ENCODE measurements at regions of chr7 and their contacts with region 1.

Region 1: GRCh38 chr7:41977151-41977651 is 259.8 kb downstream of the GLI3 start:
- DNase-seq: no peak
- H3K4me3 ChIP-seq: no peak overlapping the region
- H3K27ac ChIP-seq: no peak overlapping the region
- H3K27me3 ChIP-seq: no peaks in the 10 kb centered on the region
- CTCF ChIP-seq: peak; percentile 84

Region 2: DNA sequence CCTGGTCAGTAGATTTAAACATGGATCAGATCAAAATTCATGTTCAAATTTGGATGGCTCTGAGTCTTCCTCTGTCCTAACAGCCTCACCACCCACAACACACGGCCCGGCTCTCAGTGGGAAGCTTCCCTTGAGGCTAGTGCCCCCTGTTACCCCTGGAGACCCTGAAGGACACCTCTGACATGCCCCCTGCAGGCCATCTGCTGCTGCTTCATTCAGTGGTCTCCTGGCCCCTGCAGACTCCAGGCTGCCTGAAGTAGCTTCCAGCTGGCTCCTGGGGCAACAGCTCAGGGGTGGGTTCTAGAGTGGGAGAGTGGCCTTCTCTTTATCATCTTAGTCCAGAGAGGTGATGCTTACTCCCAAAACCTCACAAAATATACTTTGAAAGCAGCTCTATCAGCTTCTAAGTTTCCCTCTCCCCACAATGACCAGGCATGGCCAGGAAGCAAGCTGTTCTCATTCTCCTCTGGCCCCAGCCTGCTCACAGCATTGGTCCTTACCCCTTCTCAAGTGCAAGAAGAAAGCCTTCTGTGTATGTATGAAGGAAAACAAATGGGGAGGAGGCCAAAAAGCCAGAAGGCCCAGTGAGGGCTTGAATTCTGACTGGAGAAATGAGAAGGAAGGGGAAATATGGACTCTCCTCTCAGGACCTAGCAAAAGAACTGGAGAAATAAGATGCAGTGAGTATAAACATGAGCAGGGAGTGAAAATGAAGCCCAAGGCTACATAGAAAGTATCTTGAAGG is 84.7 kb before region 1 on chr7:
- CTCF ChIA-PET with region 1: no interaction called
- POLR2A ChIA-PET with region 1: no interaction called
- DNase-seq: no peak
- H3K4me3 ChIP-seq: no peak overlapping the region
- H3K27ac ChIP-seq: no peak overlapping the region
- H3K27me3 ChIP-seq: no peaks in the 10 kb centered on the region
- CTCF ChIP-seq: no peak

Region 3: DNA sequence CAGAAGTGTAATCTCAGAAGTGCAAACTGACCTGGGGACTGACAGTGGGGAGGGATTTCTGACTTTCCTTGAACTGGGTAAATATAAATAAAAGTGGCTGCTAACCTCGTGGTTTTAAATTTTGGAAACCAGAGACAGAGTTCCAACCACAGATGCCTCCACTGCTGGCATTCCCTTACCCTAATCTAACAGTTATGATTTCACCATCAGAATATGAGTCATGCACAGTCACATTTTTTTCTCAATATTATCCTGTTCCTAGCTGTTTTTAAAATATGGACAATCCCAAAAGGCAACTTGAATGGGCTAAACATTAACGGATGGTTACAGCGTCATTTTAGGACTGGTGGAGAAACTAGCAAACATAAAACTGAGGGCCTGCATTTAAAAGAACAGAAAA is 10.0 kb before region 1 on chr7:
- CTCF ChIA-PET with region 1: interaction called, 18 read pairs
- POLR2A ChIA-PET with region 1: no interaction called
- DNase-seq: no peak
- H3K4me3 ChIP-seq: no peak overlapping the region
- H3K27ac ChIP-seq: no peak overlapping the region
- H3K27me3 ChIP-seq: no peaks in the 10 kb centered on the region
- CTCF ChIP-seq: no peak

Region 4: GRCh38 chr7:42071372-42072261 is 94.4 kb after region 1 on chr7:
- CTCF ChIA-PET with region 1: interaction called, 13 read pairs
- POLR2A ChIA-PET with region 1: no interaction called
- DNase-seq: no peak
- H3K4me3 ChIP-seq: no peak overlapping the region
- H3K27ac ChIP-seq: no peak overlapping the region
- H3K27me3 ChIP-seq: no peaks in the 10 kb centered on the region
- CTCF ChIP-seq: peak; percentile 36

Region 5: GRCh38 chr7:42152329-42153230 is 175.4 kb after region 1 on chr7:
- CTCF ChIA-PET with region 1: no interaction called
- POLR2A ChIA-PET with region 1: no interaction called
- DNase-seq: no peak
- H3K4me3 ChIP-seq: no peak overlapping the region
- H3K27ac ChIP-seq: no peak overlapping the region
- H3K27me3 ChIP-seq: no peaks in the 10 kb centered on the region
- CTCF ChIP-seq: 0 out of 2 replicates have a peak, but pooled peaks have one; percentile 2

Region 6: GRCh38 chr7:42690794-42691639 is 713.8 kb after region 1 on chr7:
- CTCF ChIA-PET with region 1: interaction called, 13 read pairs
- POLR2A ChIA-PET with region 1: no interaction called
- DNase-seq: no peak
- H3K4me3 ChIP-seq: no peak overlapping the region
- H3K27ac ChIP-seq: no peak overlapping the region
- H3K27me3 ChIP-seq: peaks cover 2% of the 10 kb centered on the region
- CTCF ChIP-seq: peak; percentile 60

Region 7: GRCh38 chr7:42876182-42877068 is 899.2 kb after region 1 on chr7:
- CTCF ChIA-PET with region 1: interaction called, 17 read pairs
- POLR2A ChIA-PET with region 1: no interaction called
- DNase-seq: peak; percentile 10
- H3K4me3 ChIP-seq: no peak overlapping the region
- H3K27ac ChIP-seq: no peak overlapping the region
- H3K27me3 ChIP-seq: peaks cover 10% of the 10 kb centered on the region
- CTCF ChIP-seq: peak; percentile 81

Measured in AG04450 (cell line).